PC-3 (cell line): ENCODE measurements at regions of chr1 and their contacts with region 1.

Region 1: DNA sequence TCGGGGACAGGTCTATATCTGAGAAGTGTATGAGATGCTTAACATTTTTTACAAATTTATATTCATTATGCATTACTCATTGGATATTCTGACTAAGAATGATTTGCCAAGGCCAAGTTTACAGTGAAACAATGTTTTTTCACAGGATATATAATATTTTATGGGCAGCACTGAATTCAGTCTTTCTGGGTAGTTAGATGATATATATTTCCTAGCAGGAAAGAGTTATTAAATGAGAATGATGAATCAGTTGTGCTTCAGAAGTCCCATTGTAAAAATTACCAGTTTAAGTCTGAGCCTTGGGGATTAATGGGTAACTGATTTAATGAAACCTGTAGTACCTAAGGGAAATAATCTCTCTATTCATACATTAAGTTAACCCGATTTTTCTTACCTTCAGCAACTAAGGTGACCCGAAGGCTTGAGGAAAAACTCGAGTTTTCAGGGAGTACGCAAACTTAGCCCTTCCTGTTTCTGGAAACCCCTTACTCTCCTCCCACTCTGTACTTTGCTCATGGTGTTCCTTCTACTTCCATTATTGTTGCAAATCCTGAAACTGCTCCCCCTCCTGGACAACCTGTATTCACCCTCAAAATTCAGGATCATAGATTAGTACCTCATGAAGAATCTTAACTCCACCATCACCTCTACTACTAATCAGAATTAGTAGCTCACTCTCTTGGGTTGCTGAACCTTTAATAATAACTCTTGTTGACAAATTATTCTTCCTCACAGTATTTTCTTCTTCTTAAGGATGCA is 135.1 kb downstream of the AK5 start:
- DNase-seq: peak; percentile 68
- ATAC-seq: peak; percentile 56
- H3K4me3 ChIP-seq: no peak overlapping the region
- H3K27ac ChIP-seq: peak overlapping the region; percentile 87
- H3K4me1 ChIP-seq: peaks cover 42% of the 10 kb centered on the region
- H3K27me3 ChIP-seq: no peaks in the 10 kb centered on the region
- CTCF ChIP-seq: peak; percentile 80

Region 2: DNA sequence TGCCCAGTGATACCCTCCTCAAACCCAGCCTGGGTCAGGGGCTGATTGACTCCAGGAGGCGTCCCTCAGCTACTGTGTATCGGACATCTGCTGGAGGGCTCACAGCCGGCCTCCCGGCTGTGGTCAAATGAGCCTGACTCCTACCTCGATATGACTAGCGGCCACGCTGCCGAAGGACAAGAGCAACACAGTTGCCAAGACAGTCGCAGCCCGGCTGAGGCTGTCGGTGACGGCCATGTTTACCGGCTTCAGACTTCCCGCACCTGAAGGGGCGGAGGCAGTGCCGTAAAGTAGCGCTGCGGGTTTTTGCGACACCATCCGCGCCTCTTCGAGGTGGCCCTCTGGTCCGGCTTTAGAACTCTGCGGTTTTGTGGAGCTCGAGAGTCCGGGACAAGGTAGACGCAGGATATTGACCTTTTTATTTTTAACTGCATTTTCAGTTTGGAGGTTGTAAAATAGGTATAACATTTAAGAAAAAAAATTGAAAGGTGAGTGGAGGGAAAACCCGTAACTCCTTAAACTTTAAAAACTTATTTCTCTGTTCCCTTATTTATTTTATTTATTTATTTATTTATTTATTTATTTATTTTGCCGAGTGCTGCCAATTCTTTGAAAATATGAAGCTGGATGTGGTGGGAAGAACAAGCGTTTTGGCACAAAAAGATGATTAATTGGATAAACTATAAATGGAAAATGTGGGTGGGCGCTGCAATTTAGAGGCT is 197.5 kb before region 1 on chr1 and contains the start of gene PIGK:
- CTCF ChIA-PET with region 1: no interaction called
- POLR2A ChIA-PET with region 1: interaction called, 3 read pairs
- intact Hi-C with region 1: loop called (anchors 2 kb)
- DNase-seq: peak; percentile 94
- ATAC-seq: peak; percentile 94
- H3K4me3 ChIP-seq: peak within 1 kb of the TSS; percentile 93
- H3K27ac ChIP-seq: peak within 1 kb of the TSS; percentile 53
- H3K4me1 ChIP-seq: peaks cover 9% of the 10 kb centered on the region; the same call in 1 of the 2 replicates
- H3K27me3 ChIP-seq: no peaks in the 10 kb centered on the region
- CTCF ChIP-seq: 0 out of 2 replicates have a peak, but pooled peaks have one; percentile 10
- total RNA-seq, gene PIGK: 24.8 and 40.3 TPM in 2 replicates

Region 3: DNA sequence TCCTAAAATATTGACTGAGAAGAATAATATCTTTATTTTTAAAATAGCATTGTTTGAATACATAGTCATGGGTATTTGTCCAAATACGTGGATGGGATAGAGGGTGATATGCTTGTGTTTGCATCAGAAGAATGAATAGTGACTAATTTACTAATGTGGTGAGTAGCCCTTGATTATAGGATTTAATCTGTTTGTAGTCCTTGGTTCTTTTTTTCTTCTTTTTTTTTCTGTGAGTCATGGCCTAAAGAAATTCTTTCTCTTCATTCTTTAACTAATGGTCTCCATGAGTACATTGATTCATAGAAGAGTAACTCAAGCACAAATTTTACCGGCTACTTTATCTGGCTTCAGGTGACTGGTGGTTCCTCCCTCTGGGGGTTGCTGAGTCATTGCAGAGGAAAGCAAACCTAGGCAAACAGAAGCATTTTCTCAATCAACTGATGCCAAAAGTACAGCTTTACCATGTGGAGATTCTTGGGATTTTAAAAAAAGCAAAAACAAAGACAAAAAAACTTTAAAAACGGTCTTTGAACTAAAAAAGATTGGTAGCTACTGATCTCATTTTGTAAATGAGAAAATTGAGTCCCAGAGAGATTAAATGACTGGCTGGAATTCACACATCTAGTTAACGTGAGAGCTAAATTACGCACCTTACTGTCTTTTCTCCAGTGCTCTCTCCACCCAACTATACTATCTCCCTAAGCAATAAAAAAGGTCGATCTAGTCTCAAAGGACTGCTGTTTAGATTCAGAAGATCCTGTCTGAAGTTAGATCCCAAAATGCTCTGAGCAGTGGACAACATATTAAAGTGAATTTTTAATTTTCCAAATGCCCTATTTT is 94.6 kb before region 1 on chr1:
- CTCF ChIA-PET with region 1: interaction called, 3 read pairs
- POLR2A ChIA-PET with region 1: no interaction called
- intact Hi-C with region 1: loop called (anchors 2 kb)
- DNase-seq: peak; percentile 97
- ATAC-seq: peak; percentile 97
- H3K4me3 ChIP-seq: no peak overlapping the region
- H3K27ac ChIP-seq: peak overlapping the region; percentile 96
- H3K4me1 ChIP-seq: peaks cover 37% of the 10 kb centered on the region
- H3K27me3 ChIP-seq: no peaks in the 10 kb centered on the region
- CTCF ChIP-seq: no peak

Region 4: DNA sequence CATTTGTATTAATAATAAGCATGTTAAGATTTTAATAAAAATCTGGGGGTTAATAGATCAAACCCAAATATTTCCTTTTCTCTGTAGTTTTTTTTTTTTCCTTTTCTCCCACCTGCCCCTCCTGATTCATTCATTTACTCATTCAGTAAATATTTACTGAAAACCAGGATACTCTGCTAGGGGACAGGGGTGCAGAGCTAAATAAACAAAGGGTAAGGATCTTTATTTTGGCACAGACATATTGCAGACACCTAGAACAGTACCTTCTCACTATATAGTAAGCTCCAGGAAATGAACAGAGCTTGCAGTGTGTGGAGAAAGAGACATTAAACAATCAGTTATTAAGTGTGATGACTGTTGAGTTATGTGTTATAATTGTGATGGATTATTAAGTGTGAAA is 74.1 kb before region 1 on chr1:
- CTCF ChIA-PET with region 1: no interaction called
- POLR2A ChIA-PET with region 1: no interaction called
- intact Hi-C with region 1: loop called (anchors 5 kb)
- DNase-seq: peak; percentile 81
- ATAC-seq: peak; percentile 97
- H3K4me3 ChIP-seq: no peak overlapping the region
- H3K27ac ChIP-seq: peak overlapping the region; percentile 68
- H3K4me1 ChIP-seq: peaks cover 27% of the 10 kb centered on the region
- H3K27me3 ChIP-seq: no peaks in the 10 kb centered on the region
- CTCF ChIP-seq: no peak

Region 5: GRCh38 chr1:77394166-77394565 is 22.7 kb before region 1 on chr1:
- CTCF ChIA-PET with region 1: no interaction called
- POLR2A ChIA-PET with region 1: no interaction called
- intact Hi-C with region 1: loop called (anchors 1 kb)
- DNase-seq: peak; percentile 85
- ATAC-seq: peak; percentile 84
- H3K4me3 ChIP-seq: peak overlapping the region; percentile 47; the same call in 1 of the 2 replicates
- H3K27ac ChIP-seq: peak overlapping the region; percentile 96
- H3K4me1 ChIP-seq: peaks cover 27% of the 10 kb centered on the region
- H3K27me3 ChIP-seq: no peaks in the 10 kb centered on the region
- CTCF ChIP-seq: no peak

Region 6: DNA sequence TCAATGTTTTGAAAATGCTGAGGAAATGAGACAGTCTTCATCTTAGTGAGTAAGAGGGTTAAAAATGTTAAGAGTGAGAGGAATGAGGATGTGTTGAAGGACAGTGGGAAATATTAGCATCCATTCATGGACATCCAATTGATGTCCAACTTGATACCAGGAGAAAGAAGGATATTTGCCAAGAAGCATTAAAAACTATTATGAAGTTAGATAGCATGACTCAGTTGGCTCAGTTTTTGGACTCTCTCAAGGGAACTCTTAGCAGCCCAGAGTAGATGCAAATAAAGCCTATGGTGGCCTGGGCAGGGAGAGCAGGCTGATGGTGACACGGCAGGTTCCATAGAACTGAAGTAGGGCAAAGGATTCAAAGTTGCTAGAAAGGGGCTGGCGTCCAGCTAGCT is 94.6 kb after region 1 on chr1:
- CTCF ChIA-PET with region 1: no interaction called
- POLR2A ChIA-PET with region 1: no interaction called
- intact Hi-C with region 1: loop called (anchors 2 kb)
- DNase-seq: peak; percentile 87
- ATAC-seq: peak; percentile 89
- H3K4me3 ChIP-seq: no peak overlapping the region
- H3K27ac ChIP-seq: peak overlapping the region; percentile 46
- H3K4me1 ChIP-seq: peaks cover 20% of the 10 kb centered on the region
- H3K27me3 ChIP-seq: no peaks in the 10 kb centered on the region
- CTCF ChIP-seq: no peak

Region 7: GRCh38 chr1:77796695-77797416 is 380.0 kb after region 1 on chr1:
- CTCF ChIA-PET with region 1: no interaction called
- POLR2A ChIA-PET with region 1: no interaction called
- intact Hi-C with region 1: no loop called
- DNase-seq: no peak
- ATAC-seq: no peak
- H3K4me3 ChIP-seq: no peak overlapping the region
- H3K27ac ChIP-seq: no peak overlapping the region
- H3K4me1 ChIP-seq: no peaks in the 10 kb centered on the region
- H3K27me3 ChIP-seq: no peaks in the 10 kb centered on the region
- CTCF ChIP-seq: 0 out of 2 replicates have a peak, but pooled peaks have one; percentile 21